PC-3 (cell line): ENCODE measurements at regions of chr14 and their contacts with region 1.

Region 1: GRCh38 chr14:23301288-23301968 is 1.2 kb downstream of the PPP1R3E start:
- DNase-seq: peak; percentile 99
- ATAC-seq: peak; percentile 75
- H3K4me3 ChIP-seq: peak overlapping the region; percentile 79
- H3K27ac ChIP-seq: peak overlapping the region; percentile 63
- H3K4me1 ChIP-seq: peaks cover 20% of the 10 kb centered on the region
- H3K27me3 ChIP-seq: no peaks in the 10 kb centered on the region
- CTCF ChIP-seq: peak; percentile 78

Region 2: DNA sequence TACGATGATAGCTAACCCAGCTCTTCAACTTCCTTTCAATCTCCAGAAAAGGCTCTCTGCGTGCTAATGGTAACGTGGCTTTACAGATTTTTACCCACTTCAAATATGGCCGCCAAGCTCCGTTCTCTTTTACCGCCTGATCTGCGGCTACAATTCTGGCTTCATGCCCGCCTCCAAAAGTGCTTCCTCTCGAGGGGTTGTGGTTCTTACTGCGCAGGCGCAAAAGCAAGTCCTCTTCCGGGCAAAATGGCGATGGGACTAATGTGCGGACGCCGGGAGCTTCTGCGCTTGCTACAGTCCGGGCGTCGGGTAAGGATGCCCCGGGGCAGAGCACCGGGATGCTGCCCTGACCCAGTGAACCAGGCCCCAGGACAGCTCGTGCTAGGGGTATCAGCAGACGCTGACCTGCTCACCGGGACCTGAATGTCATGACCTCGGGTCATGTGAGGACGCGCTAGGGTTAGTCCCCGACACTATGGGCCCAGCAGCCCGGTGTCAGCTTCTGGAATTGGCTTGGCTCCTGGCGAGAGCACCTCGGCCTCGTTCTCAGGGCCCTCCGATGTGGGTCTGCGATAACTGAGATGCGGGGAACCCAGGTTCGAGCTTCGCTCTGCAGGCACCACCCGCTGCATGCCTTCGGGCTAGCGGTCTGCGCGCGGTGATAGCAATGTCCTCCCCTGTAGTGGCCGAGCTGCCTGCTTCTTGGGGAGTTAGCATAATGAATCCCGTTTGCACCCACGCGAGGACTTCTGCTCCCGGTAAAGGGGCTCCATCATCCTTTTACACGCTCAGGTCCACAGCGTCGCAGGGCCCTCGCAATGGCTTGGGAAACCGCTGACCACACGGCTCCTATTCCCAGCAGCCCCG is 534.7 kb before region 1 on chr14 and contains the start of gene OXA1L:
- CTCF ChIA-PET with region 1: no interaction called
- POLR2A ChIA-PET with region 1: no interaction called
- intact Hi-C with region 1: loop called (anchors 10 kb)
- DNase-seq: peak; percentile 98
- ATAC-seq: peak; percentile 84
- H3K4me3 ChIP-seq: peak within 1 kb of the TSS; percentile 98
- H3K27ac ChIP-seq: peak within 1 kb of the TSS; percentile 65
- H3K4me1 ChIP-seq: peaks cover 18% of the 10 kb centered on the region
- H3K27me3 ChIP-seq: no peaks in the 10 kb centered on the region
- CTCF ChIP-seq: no peak
- total RNA-seq, gene OXA1L: 126 and 146 TPM in 2 replicates

Region 3: GRCh38 chr14:22973217-22974032 is 328.0 kb before region 1 on chr14:
- CTCF ChIA-PET with region 1: no interaction called
- POLR2A ChIA-PET with region 1: no interaction called
- intact Hi-C with region 1: loop called (anchors 10 kb)
- DNase-seq: peak; percentile 87
- ATAC-seq: peak; percentile 30
- H3K4me3 ChIP-seq: no peak overlapping the region
- H3K27ac ChIP-seq: no peak overlapping the region
- H3K4me1 ChIP-seq: peaks cover 28% of the 10 kb centered on the region
- H3K27me3 ChIP-seq: no peaks in the 10 kb centered on the region
- CTCF ChIP-seq: peak; percentile 79

Region 4: GRCh38 chr14:23183479-23183878 is 117.9 kb before region 1 on chr14 and contains the start of gene SLC7A8:
- CTCF ChIA-PET with region 1: no interaction called
- POLR2A ChIA-PET with region 1: no interaction called
- intact Hi-C with region 1: no loop called
- DNase-seq: peak; percentile 21
- ATAC-seq: peak; percentile 56
- H3K4me3 ChIP-seq: peak within 1 kb of the TSS; percentile 76
- H3K27ac ChIP-seq: no peak within 1 kb of the TSS
- H3K4me1 ChIP-seq: peaks cover 13% of the 10 kb centered on the region
- H3K27me3 ChIP-seq: peaks cover 4% of the 10 kb centered on the region; the same call in 1 of the 2 replicates
- CTCF ChIP-seq: no peak
- total RNA-seq, gene SLC7A8: 0.63 and 3.8 TPM in 2 replicates

Region 5: GRCh38 chr14:23237772-23238594 is 63.4 kb before region 1 on chr14 and contains the start of gene RNF212B:
- CTCF ChIA-PET with region 1: no interaction called
- POLR2A ChIA-PET with region 1: no interaction called
- intact Hi-C with region 1: no loop called
- DNase-seq: peak; percentile 88
- ATAC-seq: peak; percentile 99
- H3K4me3 ChIP-seq: peak within 1 kb of the TSS; percentile 57
- H3K27ac ChIP-seq: no peak within 1 kb of the TSS
- H3K4me1 ChIP-seq: no peaks in the 10 kb centered on the region
- H3K27me3 ChIP-seq: peaks cover 19% of the 10 kb centered on the region; the same call in 1 of the 2 replicates
- CTCF ChIP-seq: no peak
- total RNA-seq, gene RNF212B: not detected in 2 replicates

Region 6: DNA sequence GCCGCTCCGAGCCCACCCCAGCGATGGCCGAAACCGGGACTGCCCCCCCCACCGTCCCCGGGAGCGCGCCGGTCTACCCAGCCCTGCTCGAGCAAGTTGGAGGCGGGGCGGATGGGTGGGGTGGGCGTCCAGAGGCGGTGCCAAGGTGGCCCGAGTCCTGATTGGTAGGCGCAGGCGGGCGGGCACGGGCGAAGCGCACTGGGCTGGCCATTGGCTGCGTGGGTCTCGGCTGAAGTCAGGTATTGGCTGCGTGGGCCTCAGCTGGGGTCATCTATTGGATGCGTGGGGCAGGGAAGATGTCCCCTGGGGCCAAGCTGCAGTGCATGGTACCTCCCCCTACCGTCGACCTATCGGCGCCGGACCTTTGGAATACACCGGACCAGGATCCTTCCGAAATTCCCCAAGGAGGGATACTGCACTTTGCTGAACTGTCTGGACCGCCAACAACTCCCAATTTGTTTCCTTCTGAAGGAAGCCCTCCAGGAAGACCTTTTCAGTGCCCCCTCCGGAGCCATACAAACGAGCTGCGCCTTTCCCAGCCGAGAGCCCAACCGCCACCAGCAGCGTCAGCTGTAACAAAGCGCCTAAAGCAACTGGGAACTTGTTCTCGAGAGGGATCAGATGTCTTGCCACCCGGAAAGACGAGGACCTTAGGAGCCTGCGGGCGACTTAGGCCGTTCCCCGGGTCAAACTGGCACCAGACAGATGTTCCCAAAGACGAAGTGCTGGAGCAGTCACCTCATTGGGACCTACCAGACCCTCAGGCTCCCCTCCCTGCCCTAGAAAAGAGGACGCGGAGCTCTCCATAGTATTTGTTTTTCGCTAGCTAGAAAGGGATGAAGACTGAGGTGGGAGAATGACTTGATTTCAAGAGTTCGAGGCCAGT is 15.2 kb before region 1 on chr14 and contains the start of gene HOMEZ:
- CTCF ChIA-PET with region 1: interaction called, 8 read pairs
- POLR2A ChIA-PET with region 1: interaction called, 6 read pairs
- intact Hi-C with region 1: loop called (anchors 1 kb)
- DNase-seq: peak; percentile 98
- ATAC-seq: peak; percentile 98
- H3K4me3 ChIP-seq: peak within 1 kb of the TSS; percentile 100
- H3K27ac ChIP-seq: peak within 1 kb of the TSS; percentile 50
- H3K4me1 ChIP-seq: peaks cover 20% of the 10 kb centered on the region
- H3K27me3 ChIP-seq: no peaks in the 10 kb centered on the region
- CTCF ChIP-seq: no peak
- total RNA-seq, gene HOMEZ: 4.1 and 7.7 TPM in 2 replicates